CD4-positive, alpha-beta T cell (primary cell): ENCODE measurements at regions of chr1 and their contacts with region 1.

Region 1: DNA sequence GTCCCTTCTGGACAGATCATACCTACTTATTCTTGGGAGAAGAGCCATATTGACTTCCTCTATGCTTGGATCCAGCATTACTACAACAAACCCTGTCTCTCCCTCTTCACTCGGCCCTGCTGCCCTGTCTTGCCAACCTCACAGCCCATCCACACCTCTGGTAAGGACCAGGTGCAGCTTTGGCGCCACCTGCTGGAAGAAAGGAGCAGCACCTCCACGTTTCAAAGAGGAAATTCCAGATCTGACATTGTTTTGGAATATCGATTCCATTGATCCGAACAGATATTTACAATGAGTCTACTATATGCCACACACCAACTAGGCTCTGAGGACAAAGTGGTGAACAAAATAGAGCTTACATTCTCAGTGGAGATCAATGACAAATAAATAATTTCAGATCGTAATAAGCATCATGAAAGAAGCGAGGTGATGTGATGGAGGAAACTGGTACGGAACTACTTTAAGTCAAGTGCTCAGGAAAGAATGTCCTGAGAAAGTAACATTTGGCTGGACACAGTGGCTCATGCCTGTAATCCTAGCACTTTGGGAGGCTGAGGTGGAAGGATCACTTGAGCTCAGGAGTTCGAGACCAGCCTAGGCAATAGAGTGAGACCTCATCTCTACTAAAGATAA is 18.7 kb downstream of the MFSD2A start:
- DNase-seq: peak; percentile 57 to 85 (median 68)
- ATAC-seq: peak; percentile 80
- H3K4me3 ChIP-seq: no peak overlapping the region
- H3K4me3 Mint-ChIP-seq: no peak overlapping the region
- H3K27ac ChIP-seq: no peak overlapping the region
- H3K27ac Mint-ChIP-seq: no peak overlapping the region
- H3K4me1 ChIP-seq: peaks cover 5% of the 10 kb centered on the region
- H3K4me1 Mint-ChIP-seq: peaks cover 6% of the 10 kb centered on the region
- H3K27me3 ChIP-seq: no peaks in the 10 kb centered on the region
- H3K27me3 Mint-ChIP-seq: no peaks in the 10 kb centered on the region
- CTCF ChIP-seq: peak; percentile 99

Region 2: DNA sequence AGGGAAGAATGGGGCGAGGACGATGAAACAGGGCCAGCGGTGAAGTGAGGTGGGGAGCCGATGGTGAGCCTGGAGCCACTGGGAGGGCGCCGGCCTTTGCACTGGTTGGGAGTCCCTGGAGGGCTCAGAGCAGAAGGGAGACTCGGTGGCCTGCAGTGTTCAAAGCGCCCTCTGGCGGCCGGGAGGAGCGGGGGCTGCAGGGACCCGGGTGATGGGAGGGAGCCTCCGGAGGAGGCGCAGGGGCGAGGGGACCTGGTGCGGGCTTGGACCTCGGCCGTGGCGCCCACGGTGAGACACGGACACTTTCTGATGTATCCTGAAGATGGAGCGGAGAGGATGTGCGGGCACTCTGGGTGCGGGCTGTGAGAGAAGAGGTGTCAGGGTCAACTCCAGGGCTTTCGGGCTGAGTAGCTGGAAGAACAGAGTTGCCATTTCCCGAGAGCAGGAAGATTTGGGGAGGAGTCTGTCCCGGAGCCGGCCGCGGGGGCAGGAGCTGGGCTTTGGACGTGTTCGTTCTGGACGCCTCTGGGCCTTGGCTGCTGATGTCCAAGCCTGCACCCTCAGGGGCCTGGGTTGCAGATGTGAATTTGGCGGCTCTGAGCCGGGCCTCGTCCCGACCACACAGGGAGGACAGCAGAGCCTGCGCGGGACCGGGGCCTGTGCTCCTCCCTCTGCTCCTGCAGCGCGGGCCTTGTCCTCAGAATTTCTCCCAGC is 363.8 kb before region 1 on chr1:
- CTCF ChIA-PET with region 1: no interaction called
- POLR2A ChIA-PET with region 1: no interaction called
- intact Hi-C with region 1: loop called (anchors 5 kb)
- DNase-seq: peak; percentile 59 to 86 (median 74)
- ATAC-seq: peak; percentile 87
- H3K4me3 ChIP-seq: no peak overlapping the region
- H3K4me3 Mint-ChIP-seq: peak overlapping the region; percentile 48
- H3K27ac ChIP-seq: no peak overlapping the region
- H3K27ac Mint-ChIP-seq: no peak overlapping the region
- H3K4me1 ChIP-seq: peaks cover 7% of the 10 kb centered on the region
- H3K4me1 Mint-ChIP-seq: peaks cover 12% of the 10 kb centered on the region
- H3K27me3 ChIP-seq: peaks cover 0 to 5% of the 10 kb centered on the region in 2 experiments
- H3K27me3 Mint-ChIP-seq: peaks cover 6% of the 10 kb centered on the region
- CTCF ChIP-seq: peak; percentile 74

Region 3: DNA sequence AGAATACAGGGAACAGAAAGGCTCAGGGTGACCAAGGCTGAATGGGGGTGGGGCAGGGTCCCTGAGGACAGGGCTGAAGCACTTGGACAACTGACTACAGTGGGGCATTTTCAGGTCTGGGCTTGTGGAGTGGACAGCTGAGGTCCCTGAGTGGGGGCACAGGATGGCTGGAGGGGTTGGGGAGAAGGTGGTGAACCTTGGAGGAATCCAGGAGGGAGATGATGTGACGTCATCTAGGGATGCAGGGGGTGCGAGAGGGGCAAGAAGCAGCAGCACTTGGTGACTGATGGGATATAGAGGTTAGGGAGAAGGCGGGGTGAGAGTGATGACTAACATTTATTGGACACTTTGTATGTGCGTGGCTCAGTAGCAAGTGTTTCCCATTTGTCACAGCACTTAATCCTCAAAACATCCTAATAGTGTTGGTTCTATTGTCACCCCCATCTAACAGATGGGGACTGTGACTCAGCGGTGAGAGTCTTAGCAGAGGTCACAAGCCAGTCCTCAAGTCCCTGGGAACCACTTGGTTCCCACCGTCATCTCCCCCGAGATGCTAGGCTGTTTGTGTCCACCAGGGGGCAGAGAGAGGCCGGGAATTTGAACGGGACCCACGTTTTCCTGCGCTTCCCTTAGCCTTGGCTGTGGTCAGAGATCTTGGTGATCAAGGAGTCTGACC is 157.1 kb before region 1 on chr1:
- CTCF ChIA-PET with region 1: interaction called, 6 read pairs
- POLR2A ChIA-PET with region 1: no interaction called
- intact Hi-C with region 1: loop called (anchors 1 kb)
- DNase-seq: peak; percentile 17 to 84 (median 50)
- ATAC-seq: peak; percentile 63
- H3K4me3 ChIP-seq: peak overlapping the region; percentile 33
- H3K4me3 Mint-ChIP-seq: peak overlapping the region; percentile 42
- H3K27ac ChIP-seq: no peak overlapping the region
- H3K27ac Mint-ChIP-seq: no peak overlapping the region
- H3K4me1 ChIP-seq: peaks cover 15% of the 10 kb centered on the region
- H3K4me1 Mint-ChIP-seq: peaks cover 9% of the 10 kb centered on the region
- H3K27me3 ChIP-seq: peaks cover 0 to 6% of the 10 kb centered on the region in 2 experiments
- H3K27me3 Mint-ChIP-seq: peaks cover 20% of the 10 kb centered on the region
- CTCF ChIP-seq: peak; percentile 74

Region 4: DNA sequence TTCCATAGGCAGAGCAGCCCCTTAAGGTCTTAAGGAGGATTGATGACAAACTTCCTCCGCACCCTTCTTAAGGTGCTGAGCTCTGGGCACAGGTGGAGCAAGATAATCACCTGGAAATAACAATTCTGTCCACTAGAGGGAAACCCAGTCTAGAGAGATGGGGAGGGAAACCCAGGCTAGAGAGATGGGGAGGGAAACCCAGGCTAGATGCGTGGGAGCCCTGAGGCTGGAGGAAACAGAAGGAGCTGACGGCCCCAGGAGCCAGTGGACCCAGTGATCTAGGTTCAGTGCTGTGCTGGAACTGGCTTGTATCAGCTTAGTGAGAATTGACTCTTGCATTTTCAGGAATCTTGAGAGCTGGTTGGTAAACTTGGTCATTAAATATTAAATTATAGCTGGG is 54.1 kb before region 1 on chr1:
- CTCF ChIA-PET with region 1: interaction called, 50 read pairs
- POLR2A ChIA-PET with region 1: interaction called, 3 read pairs
- intact Hi-C with region 1: loop called (anchors 1 kb)
- DNase-seq: peak in 13 of 14 experiments; percentile 4 to 82 (median 21)
- ATAC-seq: peak; percentile 99
- H3K4me3 ChIP-seq: no peak overlapping the region
- H3K4me3 Mint-ChIP-seq: no peak overlapping the region
- H3K27ac ChIP-seq: no peak overlapping the region
- H3K27ac Mint-ChIP-seq: no peak overlapping the region
- H3K4me1 ChIP-seq: peaks cover 4% of the 10 kb centered on the region
- H3K4me1 Mint-ChIP-seq: no peaks in the 10 kb centered on the region
- H3K27me3 ChIP-seq: no peaks in the 10 kb centered on the region
- H3K27me3 Mint-ChIP-seq: peaks cover 4% of the 10 kb centered on the region
- CTCF ChIP-seq: peak; percentile 70

Region 5: DNA sequence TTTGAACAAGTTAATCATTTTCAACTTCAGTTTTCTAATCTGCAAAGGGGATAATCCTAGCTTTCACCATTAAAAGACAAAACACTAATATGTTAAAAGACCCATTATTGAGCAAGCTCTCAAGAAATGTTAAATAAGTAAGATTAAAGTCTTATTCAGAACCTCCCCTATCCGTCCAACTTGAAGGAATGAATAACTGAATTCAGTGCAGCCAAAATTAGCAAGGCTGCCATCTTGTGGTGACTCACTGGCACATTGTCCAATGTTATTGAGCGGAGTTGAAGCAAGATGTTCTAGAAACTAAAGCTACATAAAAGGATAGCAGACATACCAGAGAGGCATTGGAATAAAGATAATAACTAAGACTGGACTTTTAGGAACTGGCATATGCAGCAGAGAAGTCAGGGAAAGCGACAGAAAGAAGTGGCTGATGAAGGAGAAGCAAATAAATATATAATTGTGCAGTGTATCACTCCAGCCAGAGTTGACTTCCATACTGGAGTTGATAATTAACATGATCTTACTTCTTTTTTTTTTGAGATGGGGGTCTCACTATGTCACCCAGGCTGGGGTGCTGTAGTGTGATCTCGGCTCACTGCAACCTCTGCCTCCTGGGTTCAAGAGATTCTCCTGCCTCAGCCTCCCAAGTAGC is 58.7 kb after region 1 on chr1:
- CTCF ChIA-PET with region 1: interaction called, 11 read pairs
- POLR2A ChIA-PET with region 1: no interaction called
- intact Hi-C with region 1: loop called (anchors 5 to 10 kb)
- DNase-seq: peak; percentile 13 to 79 (median 43)
- ATAC-seq: peak; percentile 74
- H3K4me3 ChIP-seq: no peak overlapping the region
- H3K4me3 Mint-ChIP-seq: peak overlapping the region; percentile 18
- H3K27ac ChIP-seq: no peak overlapping the region
- H3K27ac Mint-ChIP-seq: peak overlapping the region; percentile 52
- H3K4me1 ChIP-seq: peaks cover 47% of the 10 kb centered on the region
- H3K4me1 Mint-ChIP-seq: peaks cover 57% of the 10 kb centered on the region
- H3K27me3 ChIP-seq: no peaks in the 10 kb centered on the region
- H3K27me3 Mint-ChIP-seq: no peaks in the 10 kb centered on the region
- CTCF ChIP-seq: peak; percentile 78

Region 6: DNA sequence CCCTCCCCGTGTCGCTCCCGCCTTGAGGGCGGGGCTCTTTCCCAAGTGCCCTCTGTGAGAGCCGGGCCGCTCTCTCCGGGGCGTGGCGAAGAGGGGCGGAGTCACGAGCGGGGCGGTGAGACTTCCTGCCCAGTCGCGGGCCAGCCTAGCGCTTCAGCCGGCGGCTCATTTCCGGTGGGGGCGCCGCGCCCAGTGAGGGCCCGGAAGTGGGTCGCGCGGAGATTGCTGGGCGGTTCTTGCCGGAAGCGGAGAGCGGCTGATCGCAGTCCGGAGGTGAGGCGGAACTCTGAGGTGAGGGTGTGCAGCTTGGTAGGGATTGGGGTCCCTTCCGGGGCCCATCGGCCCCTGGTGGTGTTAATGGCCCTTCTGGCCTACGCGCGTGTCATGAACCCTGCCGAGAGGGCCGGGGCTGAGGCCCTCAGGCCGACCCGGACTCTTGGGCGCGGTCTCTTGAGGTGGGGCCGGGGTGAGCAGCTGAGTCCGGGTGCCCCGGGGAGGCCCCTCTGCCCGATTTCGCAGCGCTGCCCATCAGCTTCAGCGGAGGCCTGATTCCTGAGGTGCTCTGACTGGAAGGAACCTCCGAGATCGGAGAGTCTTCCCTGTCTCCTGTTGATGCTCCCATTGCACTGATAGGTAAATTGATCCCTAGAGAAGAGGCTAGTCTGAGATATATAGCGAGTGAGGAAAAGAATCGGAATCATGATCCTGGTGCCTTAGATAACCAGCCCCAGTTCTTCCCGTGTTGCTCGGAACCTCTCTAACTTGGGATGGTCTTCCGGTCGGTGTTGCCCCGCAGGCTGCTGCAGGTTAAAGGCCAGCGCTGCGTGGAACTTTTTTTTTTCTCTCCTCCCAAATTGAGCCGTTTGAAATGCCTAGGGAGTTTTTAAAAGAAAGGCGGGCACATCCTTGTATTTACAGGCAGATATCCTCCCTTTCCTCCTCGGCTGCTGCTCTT is 67.2 kb after region 1 on chr1 and contains the start of gene CAP1:
- CTCF ChIA-PET with region 1: interaction called, 3 read pairs
- POLR2A ChIA-PET with region 1: no interaction called
- intact Hi-C with region 1: loop called in 1 of 2 experiments (anchors 10 kb)
- DNase-seq: peak; percentile 99 to 100 (median 100)
- ATAC-seq: peak; percentile 88
- H3K4me3 ChIP-seq: peak within 1 kb of the TSS; percentile 100
- H3K4me3 Mint-ChIP-seq: peak within 1 kb of the TSS; percentile 98
- H3K27ac ChIP-seq: peak within 1 kb of the TSS; percentile 88 to 93
- H3K27ac Mint-ChIP-seq: peak within 1 kb of the TSS; percentile 95
- H3K4me1 ChIP-seq: peaks cover 77% of the 10 kb centered on the region
- H3K4me1 Mint-ChIP-seq: peaks cover 83% of the 10 kb centered on the region
- H3K27me3 ChIP-seq: no peaks in the 10 kb centered on the region
- H3K27me3 Mint-ChIP-seq: no peaks in the 10 kb centered on the region
- CTCF ChIP-seq: no peak
- total RNA-seq, gene CAP1: 121 to 126 TPM